ENCODE measurements at regions of chr17 and their contacts with region 1.

Region 1: DNA sequence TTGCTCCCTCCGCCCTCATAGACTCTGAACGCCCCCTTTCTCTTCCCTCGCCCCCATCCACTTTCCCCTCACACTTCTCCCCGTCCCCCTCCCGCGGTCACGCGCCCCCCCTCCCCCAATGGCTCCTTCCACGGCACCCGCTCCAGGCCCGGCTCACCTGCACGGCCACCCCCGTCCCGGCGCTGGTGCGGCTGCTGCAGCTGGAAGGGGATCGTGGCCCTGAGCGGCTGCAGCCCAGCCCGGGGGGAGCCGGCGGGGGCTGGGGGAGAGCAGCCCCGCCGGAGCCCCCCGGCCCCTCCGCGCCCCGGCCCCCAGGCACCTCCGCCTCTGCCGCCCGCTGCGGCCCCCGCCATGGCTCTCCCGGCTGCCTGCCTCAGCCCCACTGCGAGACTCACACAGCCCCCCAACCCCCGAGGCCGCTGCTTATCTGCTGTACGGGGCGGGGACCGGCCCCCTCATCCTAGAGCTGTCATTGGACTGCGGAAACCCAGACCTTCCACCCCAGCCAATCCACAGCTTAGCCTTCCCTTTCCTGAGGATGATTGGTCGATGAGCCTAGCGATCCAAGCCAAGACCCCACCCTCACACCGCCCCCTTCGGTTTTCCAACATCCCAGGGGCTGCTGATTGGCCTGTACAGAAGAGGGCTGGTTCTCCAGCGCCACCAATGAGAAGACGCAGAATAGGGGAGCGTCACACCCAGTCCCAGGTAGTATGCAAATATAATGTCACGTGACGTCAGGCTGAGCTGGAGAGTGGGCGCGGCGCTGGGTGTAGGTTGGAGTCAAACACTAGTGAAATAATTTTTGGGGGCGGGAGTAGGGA is at the start of gene FAM117A:
- DNase-seq: peak; percentile 98
- ATAC-seq: peak; percentile 97
- H3K4me3 Mint-ChIP-seq: peak within 1 kb of the TSS; percentile 89
- H3K27ac Mint-ChIP-seq: peak within 1 kb of the TSS; percentile 88
- H3K4me1 Mint-ChIP-seq: peaks cover 52% of the 10 kb centered on the region
- H3K27me3 Mint-ChIP-seq: no peaks in the 10 kb centered on the region
- total RNA-seq, gene FAM117A: 14.1 to 15.4 TPM

Region 2: DNA sequence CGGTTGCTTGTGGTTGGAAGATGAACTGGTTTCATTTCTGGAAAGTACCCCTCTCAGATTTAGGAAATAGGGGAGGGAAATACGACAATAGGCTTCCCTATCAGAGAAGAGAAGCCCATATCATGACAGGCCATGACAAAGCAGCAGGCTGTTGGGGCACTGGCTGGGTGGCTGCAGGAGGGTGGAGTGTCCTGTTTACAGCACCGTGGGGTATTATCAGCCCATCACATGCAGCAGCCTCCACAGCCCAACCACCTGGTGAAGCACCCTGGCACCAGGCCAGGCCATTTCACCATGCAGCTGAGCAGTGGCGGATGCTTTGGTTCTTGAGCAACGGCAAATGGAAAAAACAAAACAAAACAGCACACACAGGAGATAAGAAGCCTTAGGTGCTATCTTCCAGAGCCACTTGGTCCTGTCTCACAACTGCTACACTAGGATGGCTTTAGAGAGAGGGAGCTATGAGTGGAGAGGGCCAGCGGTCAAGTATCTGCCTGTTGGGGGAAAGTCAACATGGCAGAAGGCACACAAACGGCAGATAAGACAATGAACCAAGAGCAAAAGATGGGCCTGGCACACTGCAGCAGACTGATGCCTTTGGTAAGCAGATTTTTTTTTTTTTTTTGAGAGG is 24.2 kb before region 1 on chr17:
- CTCF ChIA-PET with region 1: interaction called, 7 read pairs
- POLR2A ChIA-PET with region 1: interaction called, 4 read pairs
- intact Hi-C with region 1: loop called (anchors 1 kb)
- DNase-seq: peak; percentile 90
- ATAC-seq: peak; percentile 88
- H3K4me3 Mint-ChIP-seq: peak overlapping the region; percentile 74
- H3K27ac Mint-ChIP-seq: peak overlapping the region; percentile 99
- H3K4me1 Mint-ChIP-seq: peaks cover 75% of the 10 kb centered on the region
- H3K27me3 Mint-ChIP-seq: no peaks in the 10 kb centered on the region

Region 3: GRCh38 chr17:49748791-49749190 is 15.2 kb before region 1 on chr17:
- CTCF ChIA-PET with region 1: interaction called, 37 read pairs
- POLR2A ChIA-PET with region 1: interaction called, 17 read pairs
- intact Hi-C with region 1: loop called in 1 of 2 experiments (anchors 2 kb)
- DNase-seq: peak; percentile 76
- ATAC-seq: peak; percentile 89
- H3K4me3 Mint-ChIP-seq: peak overlapping the region; percentile 35
- H3K27ac Mint-ChIP-seq: peak overlapping the region; percentile 88
- H3K4me1 Mint-ChIP-seq: peaks cover 77% of the 10 kb centered on the region
- H3K27me3 Mint-ChIP-seq: no peaks in the 10 kb centered on the region